H1 (cell line): ENCODE measurements at regions of chr1 and their contacts with region 1.

Region 1: DNA sequence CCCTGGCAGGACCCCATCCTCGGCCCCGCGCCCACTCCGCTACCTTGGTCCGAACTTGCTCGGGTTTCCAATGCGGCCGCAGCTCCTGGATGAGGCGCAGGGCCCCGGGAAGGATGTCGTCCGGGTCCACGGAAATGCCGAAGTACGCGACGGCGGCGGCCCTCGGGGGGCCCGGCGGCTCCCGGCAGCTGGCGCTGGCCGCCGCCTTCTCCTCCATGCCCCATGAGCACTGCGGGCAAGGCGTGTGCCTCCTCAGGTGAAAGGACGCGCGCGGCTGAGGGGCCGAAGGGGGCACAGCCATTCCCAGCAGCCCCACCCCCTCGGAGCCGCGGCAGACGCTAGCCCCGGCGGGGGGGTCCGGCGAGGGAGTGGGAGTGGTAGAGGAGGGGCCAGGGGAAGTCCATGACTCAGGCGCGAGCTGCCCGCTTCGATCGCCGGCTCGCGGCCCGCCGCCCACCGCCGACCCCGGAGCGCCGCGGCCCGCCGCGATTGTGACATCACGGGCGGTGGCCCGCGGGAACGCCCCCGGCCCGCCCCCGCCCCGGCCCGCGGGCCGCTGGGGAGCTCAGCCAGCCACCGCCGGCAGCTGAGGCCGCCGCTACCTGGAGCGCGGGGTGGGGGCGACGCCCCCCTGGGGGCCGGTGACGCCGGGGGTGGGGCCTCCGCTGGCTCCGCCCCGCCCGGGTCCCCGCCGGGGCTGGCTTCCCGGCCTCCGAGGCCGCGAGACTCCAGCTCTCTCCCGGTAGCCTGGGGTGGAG is at the start of gene ETNK2:
- DNase-seq: peak in 1 of 2 experiments; percentile 89
- H3K4me3 ChIP-seq: peak within 1 kb of the TSS; percentile 61 to 77 (median 68)
- H3K27ac ChIP-seq: no peak within 1 kb of the TSS
- H3K4me1 ChIP-seq: peaks cover 0 to 40% (median 28%) of the 10 kb centered on the region in 4 experiments; a peak in 6 of 7 replicates
- H3K27me3 ChIP-seq: peaks cover 0 to 18% (median 17%) of the 10 kb centered on the region in 4 experiments; a peak in 5 of 7 replicates
- CTCF ChIP-seq: no peak
- EP300 ChIP-seq: no peak
- POLR2A ChIP-seq: no peak
- RAD21 ChIP-seq: no peak
- total RNA-seq, gene ETNK2: 20.1 and 23.1 TPM in 2 replicates

Region 2: GRCh38 chr1:204093421-204093717 is 58.4 kb before region 1 on chr1:
- CTCF ChIA-PET with region 1: no interaction called
- POLR2A ChIA-PET with region 1: no interaction called
- DNase-seq: no peak
- H3K4me3 ChIP-seq: no peak overlapping the region
- H3K27ac ChIP-seq: no peak overlapping the region
- H3K4me1 ChIP-seq: peaks cover 28 to 57% (median 40%) of the 10 kb centered on the region in 4 experiments
- H3K27me3 ChIP-seq: no peaks in the 10 kb centered on the region
- CTCF ChIP-seq: no peak
- EP300 ChIP-seq: no peak
- POLR2A ChIP-seq: no peak
- RAD21 ChIP-seq: no peak

Region 3: DNA sequence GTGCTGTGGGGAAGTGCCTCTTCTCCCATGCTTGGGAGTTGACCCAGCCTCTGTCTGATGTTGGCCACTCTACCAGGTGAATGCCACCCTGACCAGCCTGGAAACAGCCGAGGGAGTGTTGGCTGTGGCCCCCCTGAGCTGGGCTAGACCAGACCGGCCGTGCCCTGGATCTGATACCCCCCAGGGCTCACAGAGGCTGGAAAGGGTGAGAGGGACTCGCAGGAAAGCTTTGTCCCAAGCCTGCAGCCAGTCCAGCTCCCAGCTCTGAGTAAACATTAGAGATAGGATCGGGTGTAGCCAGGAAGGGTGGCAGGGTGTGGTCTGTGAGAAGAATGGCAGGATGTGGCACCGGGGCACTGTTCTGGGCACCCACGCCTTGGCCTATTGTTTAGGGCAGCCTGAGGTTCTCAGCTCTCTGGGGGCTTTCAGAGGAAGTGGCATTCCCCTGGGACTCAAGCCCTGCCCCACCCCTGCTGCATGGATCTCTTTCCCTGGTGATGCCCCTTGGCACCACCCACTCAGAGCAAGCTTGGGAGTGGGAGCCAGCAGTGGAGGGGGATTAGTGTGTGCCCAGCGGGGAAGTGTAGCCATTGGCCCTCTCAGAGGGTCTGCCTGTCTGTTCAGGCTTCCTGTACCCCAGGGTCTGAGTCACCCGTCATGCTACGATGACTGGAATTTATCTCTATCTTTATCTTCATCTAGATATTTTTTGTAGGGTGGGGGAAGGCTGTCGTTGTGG is 47.4 kb before region 1 on chr1:
- CTCF ChIA-PET with region 1: no interaction called
- POLR2A ChIA-PET with region 1: no interaction called
- DNase-seq: no peak
- H3K4me3 ChIP-seq: no peak overlapping the region
- H3K27ac ChIP-seq: no peak overlapping the region
- H3K4me1 ChIP-seq: peaks cover 27 to 55% (median 36%) of the 10 kb centered on the region in 4 experiments
- H3K27me3 ChIP-seq: no peaks in the 10 kb centered on the region
- CTCF ChIP-seq: no peak
- EP300 ChIP-seq: no peak
- POLR2A ChIP-seq: no peak
- RAD21 ChIP-seq: no peak

Region 4: GRCh38 chr1:204136814-204137213 is 14.9 kb before region 1 on chr1:
- CTCF ChIA-PET with region 1: interaction called, 22 read pairs
- POLR2A ChIA-PET with region 1: interaction called, 35 read pairs
- DNase-seq: no peak
- H3K4me3 ChIP-seq: no peak overlapping the region
- H3K27ac ChIP-seq: no peak overlapping the region
- H3K4me1 ChIP-seq: peaks cover 0 to 2% (median under 1%) of the 10 kb centered on the region in 4 experiments; a peak in 2 of 7 replicates
- H3K27me3 ChIP-seq: no peaks in the 10 kb centered on the region; a peak in 1 of 7 replicates
- CTCF ChIP-seq: no peak
- EP300 ChIP-seq: no peak
- POLR2A ChIP-seq: peak; percentile 35 to 37; a peak in 1 of 3 replicates
- RAD21 ChIP-seq: peak; percentile 7 to 40; a peak in 3 of 4 replicates